Activated CD8-positive, alpha-beta T cell treated with anti-CD3 and anti-CD28 coated beads, Interleukin-2, amount 10 ng/mL, durations not matched to agents 7 days and 5 days (primary cell): ENCODE measurements at regions of chr14 and their contacts with region 1.

Region 1: DNA sequence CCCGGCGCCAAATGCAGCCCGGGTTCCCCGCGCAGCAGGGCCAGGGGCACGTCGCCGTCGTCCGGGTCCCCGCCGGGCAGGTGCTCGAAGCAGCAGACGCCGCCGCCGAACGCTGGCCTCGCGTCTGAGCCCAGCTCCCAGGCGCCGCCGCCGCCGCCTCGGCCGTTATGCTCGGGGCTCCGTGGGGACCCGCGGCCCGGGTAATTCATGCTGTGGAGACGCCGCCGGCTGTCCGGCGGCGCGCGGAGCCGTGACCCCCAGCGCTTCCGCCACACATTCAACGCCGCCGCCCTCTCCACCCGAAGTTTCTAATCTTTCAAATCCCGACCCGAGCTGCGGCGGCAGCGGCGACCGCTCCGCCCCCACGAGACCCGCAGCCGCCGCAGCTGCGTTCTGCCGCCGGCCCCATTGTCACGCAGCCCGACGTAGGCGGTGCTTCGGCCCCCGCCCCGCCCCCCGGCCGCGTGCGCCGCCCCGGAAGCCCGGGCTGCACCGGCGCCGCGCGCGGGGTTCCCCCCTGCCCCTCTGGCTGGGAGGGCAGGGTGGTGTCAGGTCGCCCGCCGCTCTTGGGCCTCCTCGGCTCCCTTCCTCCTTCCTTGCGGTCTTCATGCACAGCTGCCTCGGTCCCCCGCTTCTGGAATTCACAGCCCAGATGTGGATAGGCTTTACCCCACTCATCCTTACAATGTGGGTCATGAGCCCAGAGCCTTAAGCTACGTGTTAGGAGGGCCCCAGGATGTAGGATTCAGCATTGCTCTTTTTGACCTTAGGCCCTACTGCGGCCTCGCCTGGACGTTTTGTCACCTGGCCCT is at the start of gene DDHD1:
- DNase-seq: peak; percentile 84
- ATAC-seq: peak; percentile 77
- H3K4me3 Mint-ChIP-seq: peak within 1 kb of the TSS; percentile 99
- H3K27ac Mint-ChIP-seq: peak within 1 kb of the TSS; percentile 98
- H3K4me1 Mint-ChIP-seq: peaks cover 44% of the 10 kb centered on the region
- H3K27me3 Mint-ChIP-seq: no peaks in the 10 kb centered on the region
- total RNA-seq, gene DDHD1: 51.8 to 56.8 TPM

Region 2: GRCh38 chr14:53109105-53110041 is 43.7 kb before region 1 on chr14:
- CTCF ChIA-PET with region 1: interaction called, 82 read pairs
- POLR2A ChIA-PET with region 1: interaction called, 121 read pairs
- DNase-seq: peak; percentile 86
- ATAC-seq: peak; percentile 89
- H3K4me3 Mint-ChIP-seq: no peak overlapping the region
- H3K27ac Mint-ChIP-seq: no peak overlapping the region
- H3K4me1 Mint-ChIP-seq: peaks cover 36% of the 10 kb centered on the region
- H3K27me3 Mint-ChIP-seq: no peaks in the 10 kb centered on the region

Region 3: GRCh38 chr14:53126731-53127130 is 26.4 kb before region 1 on chr14:
- CTCF ChIA-PET with region 1: interaction called, 3 read pairs
- POLR2A ChIA-PET with region 1: interaction called, 11 read pairs
- DNase-seq: no peak
- ATAC-seq: peak; percentile 32
- H3K4me3 Mint-ChIP-seq: peak overlapping the region; percentile 70
- H3K27ac Mint-ChIP-seq: peak overlapping the region; percentile 85
- H3K4me1 Mint-ChIP-seq: peaks cover 5% of the 10 kb centered on the region
- H3K27me3 Mint-ChIP-seq: no peaks in the 10 kb centered on the region

Region 4: DNA sequence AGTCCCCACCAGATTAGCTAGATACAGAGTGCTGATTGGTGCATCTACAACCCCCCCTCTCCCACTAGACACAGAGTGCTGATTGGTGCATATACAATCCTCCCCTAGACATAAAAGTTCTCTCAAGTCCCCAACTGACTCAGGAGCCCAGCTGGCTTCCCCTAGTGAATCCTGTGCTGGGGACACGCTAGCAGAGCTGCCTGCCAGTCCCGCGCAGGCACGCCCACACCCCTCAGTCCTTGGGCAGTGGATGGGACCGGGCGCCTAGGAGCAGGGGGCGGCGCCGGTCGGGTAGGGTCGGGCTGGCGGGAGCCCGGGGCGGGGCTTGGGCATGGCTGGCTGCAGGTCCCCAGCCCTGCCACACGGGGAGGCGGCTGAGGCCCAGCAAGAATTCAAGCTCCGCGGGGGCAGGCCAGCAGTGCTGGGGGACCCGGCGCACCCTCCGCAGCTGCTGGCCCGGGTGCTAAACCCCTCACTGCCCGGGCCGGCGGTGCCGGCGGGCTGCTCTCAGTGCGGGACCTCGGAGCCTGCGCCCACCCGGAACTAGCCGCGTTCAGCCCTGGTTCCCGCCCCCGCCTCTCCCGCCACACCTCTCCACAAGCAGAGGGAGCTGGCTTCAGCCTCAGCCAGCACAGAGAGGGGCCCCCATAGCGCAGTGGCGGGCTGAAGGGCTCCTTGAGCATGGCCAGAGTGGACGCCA is 64.3 kb after region 1 on chr14:
- CTCF ChIA-PET with region 1: interaction called, 5 read pairs
- POLR2A ChIA-PET with region 1: interaction called, 11 read pairs
- DNase-seq: peak; percentile 84
- ATAC-seq: peak; percentile 99
- H3K4me3 Mint-ChIP-seq: peak overlapping the region; percentile 82
- H3K27ac Mint-ChIP-seq: peak overlapping the region; percentile 79
- H3K4me1 Mint-ChIP-seq: peaks cover 9% of the 10 kb centered on the region
- H3K27me3 Mint-ChIP-seq: no peaks in the 10 kb centered on the region

Region 5: DNA sequence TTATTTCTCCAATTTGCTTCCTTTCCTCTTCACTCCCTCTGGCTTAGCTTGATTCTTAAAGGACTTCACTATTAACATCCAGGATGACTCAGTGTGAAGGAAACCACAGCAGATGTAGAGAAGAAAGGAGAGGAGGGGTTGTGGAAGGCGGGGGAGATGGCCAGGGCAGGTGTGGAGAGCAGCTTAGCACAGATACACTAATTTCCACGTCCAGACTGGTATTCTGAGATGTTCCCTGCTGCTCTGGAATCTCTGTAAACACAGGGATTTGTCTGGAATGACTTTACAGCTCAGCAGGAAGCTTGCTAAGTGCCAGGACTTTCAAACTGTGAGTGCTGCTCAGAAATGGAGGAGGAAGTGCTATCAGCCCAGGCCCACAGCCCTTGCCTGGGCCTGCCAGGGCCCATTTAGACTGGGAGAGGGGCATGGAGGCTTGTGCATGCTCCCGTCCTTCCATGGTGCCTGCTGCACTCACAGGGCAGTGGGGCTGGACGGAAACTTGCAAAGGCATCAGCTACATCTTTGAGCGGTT is 202.6 kb after region 1 on chr14:
- CTCF ChIA-PET with region 1: no interaction called
- POLR2A ChIA-PET with region 1: no interaction called
- DNase-seq: no peak
- ATAC-seq: no peak
- H3K4me3 Mint-ChIP-seq: no peak overlapping the region
- H3K27ac Mint-ChIP-seq: no peak overlapping the region
- H3K4me1 Mint-ChIP-seq: peaks cover 4% of the 10 kb centered on the region
- H3K27me3 Mint-ChIP-seq: no peaks in the 10 kb centered on the region